ENCODE measurements at regions of chr6 and their contacts with region 1.

Region 1: DNA sequence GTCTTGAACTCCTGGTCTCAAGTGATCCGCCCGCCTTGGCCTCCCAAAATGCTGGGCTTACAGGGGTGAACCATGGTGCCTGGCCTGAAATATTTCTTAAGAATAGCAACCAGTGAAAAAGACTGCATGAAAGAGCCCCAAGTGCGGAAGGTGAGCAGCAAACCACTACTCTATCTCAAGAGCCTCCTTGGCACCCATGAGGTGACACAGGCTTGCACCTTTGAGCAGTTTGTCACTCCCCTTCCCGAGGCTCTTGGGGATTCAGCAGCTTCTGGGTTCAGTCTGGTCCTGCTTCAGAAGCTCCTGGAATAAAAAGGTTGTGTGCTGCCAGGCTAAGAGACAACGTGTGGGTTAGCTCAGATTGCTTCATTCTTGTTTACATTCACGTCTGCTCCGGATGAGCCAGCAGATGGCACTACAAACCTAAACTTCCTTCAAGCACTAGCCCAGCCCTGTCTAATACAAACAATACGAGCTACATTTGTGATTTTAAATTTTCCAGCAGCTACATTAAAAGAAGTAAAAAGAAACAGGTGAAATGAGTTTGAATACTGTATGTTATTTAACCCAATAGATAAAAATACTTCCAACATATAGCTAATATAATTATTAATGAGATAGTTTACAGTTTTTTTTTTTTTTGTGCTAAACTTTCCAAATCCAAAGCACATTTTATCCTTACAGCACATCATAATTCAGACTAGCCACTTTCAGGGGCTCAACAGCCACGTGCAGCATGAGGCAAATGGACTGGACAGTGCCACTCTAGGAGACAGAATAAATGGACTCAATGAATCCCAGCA is 46.2 kb downstream of the GJA10 start:
- DNase-seq: peak; percentile 63
- ATAC-seq: peak; percentile 94

Region 2: GRCh38 chr6:89999154-89999553 is 58.7 kb after region 1 on chr6:
- intact Hi-C with region 1: no loop called
- DNase-seq: peak; percentile 51
- ATAC-seq: peak; percentile 78

Region 3: DNA sequence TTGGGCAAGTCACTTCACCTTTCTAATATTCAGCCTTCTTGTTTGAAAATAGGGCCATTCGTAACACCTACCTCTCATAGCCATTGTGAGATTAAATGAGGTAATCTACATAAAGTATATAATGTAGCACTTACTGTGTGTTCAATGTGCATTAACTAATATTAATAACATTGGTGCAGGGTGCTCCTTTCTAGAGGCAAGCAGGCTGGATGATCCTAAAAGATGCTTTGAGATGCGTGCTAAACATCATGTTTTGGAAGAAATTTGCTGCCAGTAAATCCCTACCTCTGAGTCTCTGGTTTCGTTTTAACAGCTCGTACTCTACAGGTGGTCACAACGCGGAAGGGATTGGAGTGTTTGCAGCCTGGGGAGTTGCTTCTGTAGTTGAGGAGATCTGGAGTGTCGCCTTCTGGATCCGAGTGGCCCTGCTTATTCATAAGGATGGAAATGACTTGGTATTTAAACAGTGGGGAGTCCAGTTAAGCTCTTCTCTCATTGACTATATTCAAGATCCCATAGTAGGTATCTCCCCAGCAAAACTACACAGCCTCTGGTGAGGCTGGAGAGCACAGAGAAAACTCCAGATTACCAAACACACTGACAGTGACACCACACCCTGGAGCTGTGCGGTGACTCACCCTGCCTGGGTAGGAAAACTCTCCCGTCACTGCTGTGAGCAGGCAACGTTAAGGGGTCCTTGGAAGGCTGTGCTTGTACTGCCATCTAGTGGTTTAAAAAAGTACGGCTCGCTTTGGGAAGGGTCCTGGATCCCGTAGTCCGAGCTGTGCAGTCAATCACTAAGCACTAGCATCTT is 538.6 kb after region 1 on chr6:
- intact Hi-C with region 1: loop called (anchors 5 kb)
- DNase-seq: peak; percentile 85
- ATAC-seq: peak; percentile 99